ENCODE measurements at regions of chr9 and their contacts with region 1.

Region 1: GRCh38 chr9:112867416-112867991 is 23.2 kb downstream of the SLC46A2 start:
- DNase-seq: peak; percentile 53
- CTCF ChIP-seq: no peak

Region 2: DNA sequence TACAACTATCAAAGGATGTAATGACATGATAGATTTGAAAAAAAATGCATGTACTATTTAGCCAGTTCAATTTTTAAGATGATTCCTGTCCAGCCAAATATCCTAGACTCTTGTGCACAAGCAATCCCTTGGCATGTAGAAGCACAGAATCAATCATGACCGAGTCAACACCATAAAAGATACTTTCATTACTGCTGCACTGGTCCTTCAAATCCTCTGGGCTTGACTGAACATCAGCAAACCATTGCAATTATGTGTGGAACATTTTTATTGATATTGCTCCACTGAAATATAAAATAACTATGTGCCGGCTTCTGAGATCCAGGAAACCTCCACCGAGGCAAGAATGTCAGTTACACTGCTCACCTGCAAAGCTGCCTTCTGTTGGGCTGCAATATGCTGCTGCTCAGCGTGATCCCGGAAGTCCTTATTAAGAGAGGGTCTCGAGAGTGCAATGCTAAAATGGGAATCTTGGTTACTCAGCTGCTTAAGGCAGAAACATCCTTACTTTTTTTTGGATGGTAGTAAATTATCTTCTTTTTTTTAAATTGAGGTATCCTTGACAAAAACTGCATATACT is 178.3 kb before region 1 on chr9:
- CTCF ChIA-PET with region 1: no interaction called
- POLR2A ChIA-PET with region 1: no interaction called
- DNase-seq: no peak
- CTCF ChIP-seq: no peak

Region 3: DNA sequence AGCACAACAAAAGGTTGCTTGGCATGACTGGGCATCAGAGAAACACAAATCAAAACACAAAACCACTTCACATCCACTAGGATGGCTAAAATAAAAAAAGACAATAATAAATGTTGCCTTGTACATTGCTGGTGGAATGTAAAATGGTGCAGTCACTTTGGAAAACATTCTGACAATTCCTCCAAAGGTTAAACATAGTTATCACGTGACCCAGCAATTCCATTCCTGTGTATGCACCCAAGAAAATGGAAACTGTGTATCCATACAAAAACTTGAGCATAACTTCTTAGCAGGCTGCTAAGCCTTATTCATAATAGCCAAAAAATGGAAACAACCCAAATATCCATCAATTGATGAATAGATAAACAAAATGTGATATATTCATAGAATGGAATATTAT is 33.4 kb after region 1 on chr9:
- CTCF ChIA-PET with region 1: interaction called, 14 read pairs
- POLR2A ChIA-PET with region 1: no interaction called
- DNase-seq: no peak
- CTCF ChIP-seq: no peak